Heart right ventricle (tissue), 16 donors: ENCODE measurements at regions of chr20 and their contacts with region 1.

Region 1: GRCh38 chr20:9375221-9375681 is 139.1 kb upstream of the LAMP5 start:
- DNase-seq: no peak
- ATAC-seq: no peak
- H3K4me3 ChIP-seq: no peak overlapping the region
- H3K27ac ChIP-seq: peak overlapping the region in 2 of 10 donors; percentile 32 to 46
- H3K4me1 ChIP-seq: peaks cover 0 to 42% (median 13%) of the 10 kb centered on the region in 9 donors
- H3K27me3 ChIP-seq: no peaks in the 10 kb centered on the region
- CTCF ChIP-seq: no peak

Region 2: GRCh38 chr20:8782804-8783203 is 592.4 kb before region 1 on chr20:
- intact Hi-C with region 1: loop called in 1 of 10 experiments (anchors 10 kb)
- DNase-seq: no peak
- ATAC-seq: peak in 2 of 8 donors; percentile 35 to 38
- H3K4me3 ChIP-seq: no peak overlapping the region
- H3K27ac ChIP-seq: peak overlapping the region in 1 of 10 donors; percentile 35
- H3K4me1 ChIP-seq: peaks cover 0 to 9% (median 0%) of the 10 kb centered on the region in 9 donors
- H3K27me3 ChIP-seq: no peaks in the 10 kb centered on the region
- CTCF ChIP-seq: no peak

Region 3: DNA sequence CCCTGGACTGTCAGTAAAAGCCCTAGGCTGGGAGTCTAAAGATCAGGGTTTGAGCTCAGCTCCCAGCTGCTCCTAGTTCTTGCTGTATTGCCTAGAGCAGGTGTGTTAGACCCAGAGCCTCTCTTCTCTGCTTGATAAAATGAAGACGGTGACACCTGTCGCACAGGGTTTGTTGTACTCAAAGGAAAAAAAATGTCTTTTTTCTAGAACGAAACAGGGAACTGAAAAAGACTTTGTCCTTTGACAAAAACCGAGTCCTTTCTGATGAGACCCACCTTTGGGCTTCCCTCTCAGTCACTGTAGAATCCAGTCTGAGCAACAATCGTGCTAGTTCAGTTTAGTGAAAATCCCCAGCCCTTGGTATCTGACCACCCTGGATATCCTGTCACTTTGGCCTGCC is 37.1 kb after region 1 on chr20:
- intact Hi-C with region 1: no loop called
- DNase-seq: no peak
- ATAC-seq: no peak
- H3K4me3 ChIP-seq: no peak overlapping the region
- H3K27ac ChIP-seq: no peak overlapping the region
- H3K4me1 ChIP-seq: peaks cover 0 to 7% (median 0%) of the 10 kb centered on the region in 9 donors
- H3K27me3 ChIP-seq: no peaks in the 10 kb centered on the region
- CTCF ChIP-seq: no peak